Gastrocnemius medialis (tissue), 4 donors: ENCODE measurements at regions of chr19 and their contacts with region 1.

Region 1: DNA sequence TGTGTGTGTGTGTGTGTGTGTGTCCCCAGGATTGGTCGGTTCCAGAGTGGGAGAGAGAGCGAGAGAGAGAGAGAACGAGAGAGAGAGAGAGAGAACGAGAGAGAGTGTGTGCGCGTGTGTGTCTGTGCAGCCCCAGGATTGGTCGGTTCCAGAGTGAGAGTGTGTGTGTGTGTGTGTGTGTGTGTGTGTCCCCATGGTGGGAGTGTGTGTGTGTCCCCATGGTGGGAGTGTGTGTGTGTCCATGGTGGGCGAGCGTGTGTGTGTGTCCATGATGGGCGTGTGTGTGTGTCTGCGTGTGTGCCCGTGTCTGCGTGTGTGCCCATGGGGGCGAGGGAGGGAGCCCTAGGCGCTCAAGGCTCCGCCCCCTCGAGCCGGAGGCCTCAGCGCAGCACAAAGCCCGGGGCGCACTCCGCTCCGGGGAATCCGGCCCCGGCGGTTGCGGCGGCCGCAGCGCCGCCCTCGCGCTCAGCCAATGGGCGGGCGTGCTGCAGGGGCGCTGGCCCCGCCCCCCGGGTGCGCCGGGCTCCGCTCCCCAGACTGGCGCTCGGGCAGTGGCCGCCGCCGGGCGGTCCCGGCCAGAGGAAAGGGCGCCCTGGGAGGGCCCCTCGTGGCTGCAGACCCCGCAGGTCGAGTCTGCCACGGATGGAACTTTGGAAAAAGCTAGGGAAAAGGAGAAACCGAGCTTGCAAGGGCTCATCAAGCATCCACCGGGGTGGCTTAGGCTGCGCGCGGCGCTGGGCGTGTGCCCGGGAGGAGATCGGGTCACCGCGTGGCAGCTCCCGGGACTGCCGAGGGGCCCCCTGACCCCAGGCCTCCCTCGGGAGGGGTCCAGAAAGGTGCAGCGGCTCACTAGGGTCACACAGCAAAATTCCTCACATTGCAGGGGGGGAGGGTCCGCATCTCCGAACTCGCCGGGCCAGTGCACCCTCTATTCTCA is 96.2 kb downstream of the INSR start:
- DNase-seq: peak; percentile 91 to 95
- ATAC-seq: peak; percentile 77 to 82
- H3K4me3 ChIP-seq: peak overlapping the region; percentile 52 to 86 (median 68)
- H3K27ac ChIP-seq: peak overlapping the region; percentile 76 to 93 (median 86)
- H3K4me1 ChIP-seq: peaks cover 18 to 26% of the 10 kb centered on the region in 2 donors
- H3K27me3 ChIP-seq: no peaks in the 10 kb centered on the region
- CTCF ChIP-seq: peak; percentile 26 to 52 (median 48)
- POLR2A ChIP-seq: peak; percentile 49 to 73

Region 2: GRCh38 chr19:7159105-7159933 is 38.7 kb before region 1 on chr19:
- in situ Hi-C with region 1: no loop called
- intact Hi-C with region 1: loop called (anchors 5 kb)
- DNase-seq: peak; percentile 95 to 98
- ATAC-seq: peak; percentile 98
- H3K4me3 ChIP-seq: peak overlapping the region; percentile 2 to 43 (median 38)
- H3K27ac ChIP-seq: peak overlapping the region; percentile 93 to 95 (median 94)
- H3K4me1 ChIP-seq: peaks cover 14 to 15% of the 10 kb centered on the region in 2 donors
- H3K27me3 ChIP-seq: no peaks in the 10 kb centered on the region
- CTCF ChIP-seq: no peak
- POLR2A ChIP-seq: peak; percentile 52 to 67

Region 3: GRCh38 chr19:7224209-7224686 is 26.2 kb after region 1 on chr19:
- in situ Hi-C with region 1: no loop called
- intact Hi-C with region 1: no loop called
- DNase-seq: peak; percentile 29 to 44
- ATAC-seq: peak; percentile 56 to 61
- H3K4me3 ChIP-seq: peak overlapping the region in 2 of 4 donors; percentile 10 to 12
- H3K27ac ChIP-seq: peak overlapping the region; percentile 4 to 43 (median 26)
- H3K4me1 ChIP-seq: peaks cover 17 to 47% of the 10 kb centered on the region in 2 donors
- H3K27me3 ChIP-seq: no peaks in the 10 kb centered on the region
- CTCF ChIP-seq: no peak
- POLR2A ChIP-seq: no peak

Region 4: DNA sequence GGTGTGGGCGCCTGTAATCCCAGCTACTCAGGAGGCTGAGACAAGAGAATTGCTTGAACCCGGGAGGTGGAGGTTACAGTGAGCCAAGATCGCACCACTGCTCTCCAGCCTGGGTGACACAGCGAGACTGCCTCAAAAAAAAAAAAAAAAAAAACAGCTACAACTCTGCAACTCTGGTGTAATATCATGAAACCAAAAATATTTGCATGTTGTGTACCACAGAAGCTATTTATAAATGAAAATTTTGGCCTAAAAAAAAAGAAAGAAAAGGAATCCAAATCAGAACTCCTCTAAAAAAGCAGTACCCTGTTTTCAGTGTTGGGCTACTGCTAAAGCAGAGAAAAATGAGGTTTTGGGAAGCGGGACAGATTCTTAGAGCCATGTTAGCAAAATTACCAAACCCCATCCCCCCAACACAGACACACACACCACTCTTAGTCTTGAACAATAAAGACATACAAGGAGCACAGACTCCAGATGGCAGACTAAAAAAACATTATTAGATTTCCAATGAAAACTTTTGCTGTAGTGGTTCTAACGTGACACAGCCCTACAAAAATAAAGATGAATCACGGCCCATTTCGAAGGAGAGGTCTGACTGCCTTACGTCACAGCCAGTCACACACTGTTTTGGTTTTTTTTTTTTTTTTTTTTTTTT is 44.7 kb after region 1 on chr19:
- in situ Hi-C with region 1: no loop called
- intact Hi-C with region 1: loop called (anchors 1 kb)
- DNase-seq: peak in 1 of 2 donors; percentile 29
- ATAC-seq: peak; percentile 89 to 99
- H3K4me3 ChIP-seq: no peak overlapping the region
- H3K27ac ChIP-seq: peak overlapping the region; percentile 77 to 87 (median 82)
- H3K4me1 ChIP-seq: peaks cover 22 to 28% of the 10 kb centered on the region in 2 donors
- H3K27me3 ChIP-seq: no peaks in the 10 kb centered on the region
- CTCF ChIP-seq: no peak
- POLR2A ChIP-seq: no peak

Region 5: GRCh38 chr19:7293795-7294570 is 96.0 kb after region 1 on chr19 and contains the start of gene INSR:
- in situ Hi-C with region 1: loop called (anchors 5 to 10 kb)
- intact Hi-C with region 1: loop called (anchors 1 kb)
- DNase-seq: peak; percentile 86 to 93
- ATAC-seq: peak; percentile 82 to 90
- H3K4me3 ChIP-seq: peak within 1 kb of the TSS; percentile 76 to 98 (median 86)
- H3K27ac ChIP-seq: peak within 1 kb of the TSS; percentile 92 to 99 (median 98)
- H3K4me1 ChIP-seq: peaks cover 8 to 17% of the 10 kb centered on the region in 2 donors
- H3K27me3 ChIP-seq: no peaks in the 10 kb centered on the region
- CTCF ChIP-seq: no peak
- POLR2A ChIP-seq: peak; percentile 77 to 86
- total RNA-seq, gene INSR: 54.0 to 226 (median 71.1) TPM